Cardiac septum (tissue), 1 donor: ENCODE measurements at regions of chr7 and their contacts with region 1.

Region 1: GRCh38 chr7:23474094-23474828 is 4.0 kb upstream of the IGF2BP3 start:
- DNase-seq: peak; percentile 88

Region 2: DNA sequence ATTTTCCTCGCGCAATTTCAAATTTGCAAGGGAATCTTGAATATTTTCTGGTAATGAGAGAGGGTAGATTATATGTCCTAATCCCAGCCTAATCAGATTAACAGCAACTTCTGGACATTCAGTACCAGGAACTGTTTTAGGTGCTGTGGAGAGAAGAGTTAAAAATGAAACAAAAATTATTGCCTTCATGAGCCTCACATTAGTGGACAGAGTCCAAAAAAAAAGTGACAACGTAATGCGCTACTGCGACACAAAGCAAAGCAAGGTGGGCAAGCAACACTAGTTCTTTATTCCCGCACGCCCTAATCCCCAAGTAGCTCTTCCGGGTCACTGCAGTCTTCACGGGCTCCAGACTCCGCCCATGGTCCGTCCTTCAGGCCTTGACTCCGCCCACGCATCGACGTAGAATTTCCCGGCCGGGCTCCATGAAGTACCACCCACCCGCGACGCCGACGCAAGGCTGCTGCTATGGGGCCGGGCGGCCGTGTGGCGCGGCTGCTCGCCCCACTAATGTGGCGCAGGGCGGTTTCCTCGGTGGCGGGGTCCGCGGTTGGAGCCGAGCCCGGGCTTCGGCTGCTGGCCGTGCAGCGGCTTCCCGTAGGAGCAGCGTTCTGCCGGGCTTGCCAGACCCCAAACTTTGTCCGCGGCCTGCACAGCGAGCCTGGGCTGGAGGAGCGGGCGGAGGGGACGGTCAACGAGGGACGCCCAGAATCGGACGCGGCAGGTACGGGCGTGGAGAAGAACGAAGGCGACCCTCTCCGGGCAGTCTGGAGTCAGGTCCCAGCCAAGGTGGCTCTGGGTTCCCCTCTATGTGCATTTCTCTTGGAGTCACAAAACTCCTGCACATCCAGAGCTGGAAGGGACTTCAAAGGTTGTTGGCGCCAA is 175.1 kb before region 1 on chr7 and contains the start of gene MALSU1:
- intact Hi-C with region 1: loop called (anchors 5 kb)
- DNase-seq: peak; percentile 99
- total RNA-seq, gene MALSU1: 83.8 TPM

Region 3: GRCh38 chr7:23531794-23532489 is 57.7 kb after region 1 on chr7 and contains the start of gene TRA2A:
- intact Hi-C with region 1: no loop called
- DNase-seq: peak; percentile 99
- total RNA-seq, gene TRA2A: 32.6 TPM